ENCODE measurements at regions of chr17 and their contacts with region 1.

Region 1: GRCh38 chr17:31842183-31843069 is 16.6 kb downstream of the COPRS start:
- DNase-seq: peak; percentile 80 to 86
- H3K4me3 ChIP-seq: peak overlapping the region; percentile 41
- H3K4me3 Mint-ChIP-seq: no peak overlapping the region
- H3K27ac Mint-ChIP-seq: no peak overlapping the region
- H3K4me1 ChIP-seq: peaks cover 6% of the 10 kb centered on the region
- H3K4me1 Mint-ChIP-seq: peaks cover 7% of the 10 kb centered on the region
- H3K27me3 ChIP-seq: no peaks in the 10 kb centered on the region
- H3K27me3 Mint-ChIP-seq: no peaks in the 10 kb centered on the region
- CTCF ChIP-seq: peak; percentile 93 to 95

Region 2: DNA sequence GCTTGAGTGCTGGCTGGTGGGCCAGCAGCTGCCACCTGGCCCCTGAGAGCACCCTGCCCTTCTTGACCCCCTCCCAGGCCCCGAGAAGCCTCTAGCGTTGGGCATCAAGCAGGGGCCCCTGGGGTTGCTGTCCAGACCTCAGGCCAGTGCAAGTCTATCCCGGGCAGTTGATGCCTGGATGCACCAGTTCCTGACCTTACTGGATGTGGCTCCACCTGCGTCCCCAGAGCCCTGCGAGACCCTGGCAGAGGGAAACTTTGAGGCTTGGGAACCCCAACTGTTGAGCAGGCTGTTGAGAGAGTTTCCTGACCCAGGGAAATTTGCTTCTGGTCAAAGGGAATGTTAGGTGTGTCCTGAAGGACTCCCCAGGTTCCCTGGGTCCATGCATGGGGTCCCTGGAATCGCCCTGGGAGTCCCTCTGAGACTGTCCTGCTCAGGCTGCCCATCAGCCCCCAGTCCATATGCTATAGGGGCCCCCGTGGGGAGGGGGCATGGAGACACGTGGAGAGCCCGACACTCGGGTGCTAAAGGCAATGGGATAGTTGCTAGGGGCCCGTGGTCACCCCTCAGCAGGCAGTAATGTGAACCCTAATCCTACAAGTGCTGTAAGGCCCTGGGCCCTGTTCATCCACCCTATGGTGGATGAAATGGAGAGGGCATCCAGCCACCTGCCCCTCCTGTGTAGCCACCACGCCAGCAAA is 404.6 kb before region 1 on chr17:
- CTCF ChIA-PET with region 1: interaction called, 3 read pairs
- POLR2A ChIA-PET with region 1: no interaction called
- intact Hi-C with region 1: loop called (anchors 1 kb)
- DNase-seq: no peak
- H3K4me3 ChIP-seq: no peak overlapping the region
- H3K4me3 Mint-ChIP-seq: no peak overlapping the region
- H3K27ac Mint-ChIP-seq: no peak overlapping the region
- H3K4me1 ChIP-seq: 0 out of 2 replicates have a peak, but pooled peaks cover 6% of the 10 kb centered on the region
- H3K4me1 Mint-ChIP-seq: no peaks in the 10 kb centered on the region
- H3K27me3 ChIP-seq: no peaks in the 10 kb centered on the region
- H3K27me3 Mint-ChIP-seq: no peaks in the 10 kb centered on the region
- CTCF ChIP-seq: no peak

Region 3: DNA sequence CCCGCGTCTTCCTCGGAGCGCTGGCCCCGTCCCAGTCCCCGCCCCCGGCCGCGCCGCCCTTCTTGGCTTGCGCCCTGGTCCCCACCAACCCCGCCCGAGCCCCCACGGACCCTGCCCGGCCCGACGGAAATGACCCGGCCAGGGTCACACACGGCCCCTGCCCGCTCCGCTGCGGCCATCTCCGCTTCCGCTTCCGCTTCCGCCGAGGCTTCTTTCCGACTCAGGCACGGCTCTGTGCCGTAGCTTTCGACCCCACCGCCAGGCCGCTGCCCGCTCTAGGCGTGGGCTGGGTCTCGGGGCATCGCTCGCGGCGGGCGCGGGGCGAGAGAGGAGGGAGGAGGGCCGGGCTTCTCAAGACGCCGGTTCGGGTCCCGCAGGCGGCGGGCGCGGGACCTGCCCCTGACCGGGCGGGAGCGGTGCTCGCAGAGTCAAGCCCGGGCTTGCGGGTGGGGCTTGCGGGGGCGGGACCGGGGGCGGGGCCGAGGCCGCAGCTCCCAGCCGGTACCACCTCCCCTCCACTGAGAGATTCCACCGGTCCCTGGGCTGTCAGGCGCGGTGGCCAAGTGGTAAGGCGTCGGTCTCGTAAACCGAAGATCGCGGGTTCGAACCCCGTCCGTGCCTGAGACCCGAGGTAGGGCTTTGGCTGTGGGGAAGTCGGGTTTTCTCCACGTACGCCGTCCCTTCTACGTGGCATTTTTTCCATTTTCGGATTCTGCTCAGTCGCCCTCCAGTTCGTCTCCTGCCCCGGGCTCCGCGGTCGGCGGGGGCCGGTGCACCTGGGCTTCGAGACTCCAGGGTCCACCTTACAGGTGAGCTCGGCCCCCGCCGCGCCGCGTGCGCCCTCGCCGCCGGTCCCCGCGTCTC is 292.7 kb before region 1 on chr17:
- CTCF ChIA-PET with region 1: interaction called, 3 read pairs
- POLR2A ChIA-PET with region 1: no interaction called
- intact Hi-C with region 1: loop called (anchors 2 kb)
- DNase-seq: peak; percentile 94 to 97
- H3K4me3 ChIP-seq: peak overlapping the region; percentile 65
- H3K4me3 Mint-ChIP-seq: peak overlapping the region; percentile 79
- H3K27ac Mint-ChIP-seq: peak overlapping the region; percentile 71
- H3K4me1 ChIP-seq: no peaks in the 10 kb centered on the region
- H3K4me1 Mint-ChIP-seq: peaks cover 7% of the 10 kb centered on the region
- H3K27me3 ChIP-seq: no peaks in the 10 kb centered on the region
- H3K27me3 Mint-ChIP-seq: no peaks in the 10 kb centered on the region
- CTCF ChIP-seq: no peak

Region 4: GRCh38 chr17:31558748-31559644 is 283.4 kb before region 1 on chr17:
- CTCF ChIA-PET with region 1: interaction called, 30 read pairs
- POLR2A ChIA-PET with region 1: interaction called, 3 read pairs
- intact Hi-C with region 1: no loop called
- DNase-seq: peak; percentile 84 to 88
- H3K4me3 ChIP-seq: peak overlapping the region; percentile 94
- H3K4me3 Mint-ChIP-seq: peak overlapping the region; percentile 89
- H3K27ac Mint-ChIP-seq: peak overlapping the region; percentile 87
- H3K4me1 ChIP-seq: peaks cover 18% of the 10 kb centered on the region
- H3K4me1 Mint-ChIP-seq: peaks cover 19% of the 10 kb centered on the region
- H3K27me3 ChIP-seq: no peaks in the 10 kb centered on the region
- H3K27me3 Mint-ChIP-seq: no peaks in the 10 kb centered on the region
- CTCF ChIP-seq: peak; percentile 44 to 97

Region 5: DNA sequence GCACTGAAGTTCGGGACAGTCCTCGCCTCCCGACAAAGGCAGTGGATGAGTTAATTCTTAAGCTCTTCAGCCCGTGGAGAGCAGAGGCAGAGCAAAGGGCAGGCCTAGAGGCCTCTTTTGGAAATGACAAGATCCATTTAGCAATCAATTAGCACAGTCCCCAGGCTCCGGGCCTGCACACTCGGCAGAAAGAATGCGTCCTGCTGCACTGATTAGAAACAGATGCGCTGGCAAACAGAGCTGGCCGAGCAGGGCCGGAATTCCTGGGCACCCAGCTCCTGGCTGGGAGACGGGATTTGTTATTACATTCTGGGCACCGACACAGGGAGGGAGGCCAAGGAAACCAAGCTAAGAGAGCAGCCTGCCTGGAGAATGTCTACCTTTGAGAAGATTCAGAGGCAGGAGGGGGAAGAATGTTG is 146.2 kb before region 1 on chr17:
- CTCF ChIA-PET with region 1: interaction called, 5 read pairs
- POLR2A ChIA-PET with region 1: no interaction called
- intact Hi-C with region 1: loop called (anchors 5 kb)
- DNase-seq: peak; percentile 69 to 72
- H3K4me3 ChIP-seq: no peak overlapping the region
- H3K4me3 Mint-ChIP-seq: peak overlapping the region; percentile 27
- H3K27ac Mint-ChIP-seq: peak overlapping the region; percentile 16
- H3K4me1 ChIP-seq: peaks cover 10% of the 10 kb centered on the region
- H3K4me1 Mint-ChIP-seq: peaks cover 8% of the 10 kb centered on the region
- H3K27me3 ChIP-seq: no peaks in the 10 kb centered on the region
- H3K27me3 Mint-ChIP-seq: no peaks in the 10 kb centered on the region
- CTCF ChIP-seq: peak in 1 of 2 experiments; percentile 21

Region 6: GRCh38 chr17:31754239-31754945 is 88.0 kb before region 1 on chr17:
- CTCF ChIA-PET with region 1: no interaction called
- POLR2A ChIA-PET with region 1: no interaction called
- intact Hi-C with region 1: loop called (anchors 5 kb)
- DNase-seq: peak; percentile 22 to 49
- H3K4me3 ChIP-seq: no peak overlapping the region
- H3K4me3 Mint-ChIP-seq: no peak overlapping the region
- H3K27ac Mint-ChIP-seq: peak overlapping the region; percentile 54
- H3K4me1 ChIP-seq: peaks cover 24% of the 10 kb centered on the region
- H3K4me1 Mint-ChIP-seq: peaks cover 12% of the 10 kb centered on the region
- H3K27me3 ChIP-seq: no peaks in the 10 kb centered on the region
- H3K27me3 Mint-ChIP-seq: no peaks in the 10 kb centered on the region
- CTCF ChIP-seq: no peak

Region 7: GRCh38 chr17:31803494-31804213 is 38.8 kb before region 1 on chr17:
- CTCF ChIA-PET with region 1: interaction called, 6 read pairs
- POLR2A ChIA-PET with region 1: no interaction called
- intact Hi-C with region 1: loop called (anchors 2 kb)
- DNase-seq: peak; percentile 71 to 73
- H3K4me3 ChIP-seq: no peak overlapping the region
- H3K4me3 Mint-ChIP-seq: peak overlapping the region; percentile 16
- H3K27ac Mint-ChIP-seq: peak overlapping the region; percentile 72
- H3K4me1 ChIP-seq: peaks cover 21% of the 10 kb centered on the region
- H3K4me1 Mint-ChIP-seq: peaks cover 8% of the 10 kb centered on the region
- H3K27me3 ChIP-seq: no peaks in the 10 kb centered on the region
- H3K27me3 Mint-ChIP-seq: no peaks in the 10 kb centered on the region
- CTCF ChIP-seq: peak in 1 of 2 experiments; percentile 13

Measured in Caco-2 (cell line).